ENCODE measurements at regions of chr15 and their contacts with region 1.

Region 1: DNA sequence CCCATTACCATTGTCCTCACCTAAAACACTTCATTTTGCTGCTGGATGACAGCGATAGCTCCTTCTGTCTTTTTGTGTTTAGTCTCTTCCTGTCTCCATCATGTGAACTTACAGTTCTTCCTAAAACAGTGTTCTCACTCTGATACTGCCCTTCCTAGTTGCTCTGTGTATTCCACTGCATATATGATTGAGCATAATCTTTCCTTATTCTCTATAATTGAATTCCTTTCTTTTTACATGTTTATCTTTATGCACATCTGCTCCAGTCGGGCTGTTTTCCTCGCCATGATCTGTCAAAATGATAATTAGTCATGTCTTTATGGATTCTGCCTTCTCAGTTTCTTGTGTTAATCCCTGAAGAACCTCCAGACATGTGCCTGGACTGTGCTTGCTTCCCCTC is 405.1 kb upstream of the SEMA6D start:
- DNase-seq: no peak
- ATAC-seq: no peak
- H3K4me3 ChIP-seq: no peak overlapping the region
- H3K27ac ChIP-seq: no peak overlapping the region
- H3K4me1 ChIP-seq: no peaks in the 10 kb centered on the region
- H3K27me3 ChIP-seq: no peaks in the 10 kb centered on the region
- CTCF ChIP-seq: no peak

Region 2: DNA sequence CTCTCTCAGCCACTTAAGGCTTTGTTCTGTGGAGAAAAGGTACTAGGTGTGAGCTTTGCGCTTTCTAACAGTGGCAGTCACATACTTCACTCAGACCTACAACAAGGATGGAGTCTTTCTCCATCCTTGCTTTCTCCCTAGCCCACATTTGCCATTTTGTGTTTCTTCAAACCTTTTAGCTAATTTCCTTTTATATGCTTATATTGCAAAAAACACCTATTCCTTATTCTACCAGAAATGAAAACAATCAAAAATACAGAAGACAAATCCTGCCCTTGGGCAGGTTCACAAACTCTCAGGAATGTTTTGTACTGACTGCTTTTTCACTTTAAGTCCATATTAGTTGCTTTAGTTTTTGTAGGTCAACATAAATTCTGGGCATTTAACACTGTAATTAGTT is 763.2 kb before region 1 on chr15:
- CTCF ChIA-PET with region 1: no interaction called
- POLR2A ChIA-PET with region 1: interaction called, 23 read pairs
- intact Hi-C with region 1: no loop called
- DNase-seq: no peak
- ATAC-seq: no peak
- H3K4me3 ChIP-seq: no peak overlapping the region
- H3K27ac ChIP-seq: no peak overlapping the region
- H3K4me1 ChIP-seq: no peaks in the 10 kb centered on the region
- H3K27me3 ChIP-seq: no peaks in the 10 kb centered on the region
- CTCF ChIP-seq: no peak